ENCODE measurements at regions of chr11 and their contacts with region 1.

Region 1: DNA sequence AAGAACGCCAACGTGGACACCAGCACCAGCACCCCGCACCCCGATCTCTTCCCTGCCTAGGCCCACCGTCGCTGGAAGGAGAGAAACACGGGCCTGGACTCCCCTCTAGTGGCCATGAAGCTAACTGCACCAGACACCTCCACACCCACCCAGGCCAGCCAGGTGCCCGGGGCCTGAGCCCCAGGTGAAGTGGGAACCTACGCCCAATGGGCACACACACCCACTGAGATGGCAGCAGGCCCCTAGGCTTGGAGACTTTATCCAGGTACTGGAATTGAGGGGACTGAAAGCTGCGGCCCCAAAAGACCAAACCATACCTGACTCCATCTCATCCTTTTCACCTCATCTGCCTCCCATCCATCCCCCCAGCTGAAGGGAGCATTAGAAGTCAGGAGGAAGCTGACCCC is 81.0 kb downstream of the BUD13 start:
- DNase-seq: peak; percentile 64 to 86 (median 82)
- ATAC-seq: peak; percentile 96
- H3K4me3 ChIP-seq: no peak overlapping the region
- H3K27ac ChIP-seq: no peak overlapping the region
- H3K4me1 ChIP-seq: no peaks in the 10 kb centered on the region
- H3K27me3 ChIP-seq: peaks cover 0 to 12% of the 10 kb centered on the region in 2 experiments; a peak in 1 of 5 replicates
- CTCF ChIP-seq: peak; percentile 79 to 92 (median 85)
- EP300 ChIP-seq: no peak
- POLR2A ChIP-seq: no peak
- RAD21 ChIP-seq: peak; percentile 65 to 78

Region 2: GRCh38 chr11:114774599-114775361 is 1917.0 kb before region 1 on chr11:
- CTCF ChIA-PET with region 1: no interaction called
- POLR2A ChIA-PET with region 1: no interaction called
- in situ Hi-C with region 1: loop called (anchors 10 kb)
- intact Hi-C with region 1: no loop called
- DNase-seq: peak; percentile 59 to 72 (median 69)
- ATAC-seq: peak; percentile 99
- H3K4me3 ChIP-seq: no peak overlapping the region
- H3K27ac ChIP-seq: no peak overlapping the region
- H3K4me1 ChIP-seq: no peaks in the 10 kb centered on the region; a peak in 1 of 5 replicates
- H3K27me3 ChIP-seq: peaks cover 0 to 6% of the 10 kb centered on the region in 2 experiments; a peak in 1 of 5 replicates
- CTCF ChIP-seq: peak; percentile 76 to 91 (median 85)
- EP300 ChIP-seq: no peak
- POLR2A ChIP-seq: no peak
- RAD21 ChIP-seq: peak; percentile 63 to 79

Region 3: GRCh38 chr11:115990004-115990447 is 701.7 kb before region 1 on chr11:
- CTCF ChIA-PET with region 1: interaction called, 6 read pairs
- POLR2A ChIA-PET with region 1: no interaction called
- in situ Hi-C with region 1: loop called (anchors 10 kb)
- intact Hi-C with region 1: loop called (anchors 5 kb)
- DNase-seq: peak; percentile 30 to 66 (median 64)
- ATAC-seq: peak; percentile 98
- H3K4me3 ChIP-seq: peak overlapping the region; percentile 20; the same call in 1 of the 2 replicates
- H3K27ac ChIP-seq: no peak overlapping the region
- H3K4me1 ChIP-seq: no peaks in the 10 kb centered on the region; a peak in 1 of 5 replicates
- H3K27me3 ChIP-seq: no peaks in the 10 kb centered on the region; a peak in 1 of 5 replicates
- CTCF ChIP-seq: peak; percentile 69 to 86 (median 86)
- EP300 ChIP-seq: no peak
- POLR2A ChIP-seq: no peak
- RAD21 ChIP-seq: peak; percentile 32 to 52; a peak in 3 of 4 replicates

Region 4: GRCh38 chr11:116276051-116277044 is 415.4 kb before region 1 on chr11:
- CTCF ChIA-PET with region 1: no interaction called
- POLR2A ChIA-PET with region 1: no interaction called
- in situ Hi-C with region 1: no loop called
- intact Hi-C with region 1: loop called (anchors 5 kb)
- DNase-seq: peak; percentile 79 to 86 (median 84)
- ATAC-seq: peak; percentile 98
- H3K4me3 ChIP-seq: peak overlapping the region; percentile 62
- H3K27ac ChIP-seq: no peak overlapping the region; the same call in 2 of the 3 replicates
- H3K4me1 ChIP-seq: peaks cover 0 to 13% of the 10 kb centered on the region in 2 experiments; a peak in 2 of 5 replicates
- H3K27me3 ChIP-seq: no peaks in the 10 kb centered on the region; a peak in 1 of 5 replicates
- CTCF ChIP-seq: peak in 2 of 3 experiments; percentile 92 to 96
- EP300 ChIP-seq: peak; percentile 10; the same call in 1 of the 2 replicates
- POLR2A ChIP-seq: no peak
- RAD21 ChIP-seq: peak; percentile 85 to 87

Region 5: GRCh38 chr11:116454020-116454645 is 237.6 kb before region 1 on chr11:
- CTCF ChIA-PET with region 1: interaction called, 4 read pairs
- POLR2A ChIA-PET with region 1: no interaction called
- in situ Hi-C with region 1: no loop called
- intact Hi-C with region 1: loop called (anchors 1 kb)
- DNase-seq: peak; percentile 14 to 55 (median 23)
- ATAC-seq: peak; percentile 80
- H3K4me3 ChIP-seq: no peak overlapping the region
- H3K27ac ChIP-seq: no peak overlapping the region
- H3K4me1 ChIP-seq: no peaks in the 10 kb centered on the region
- H3K27me3 ChIP-seq: peaks cover 7 to 11% of the 10 kb centered on the region in 2 experiments; a peak in 3 of 5 replicates
- CTCF ChIP-seq: peak; percentile 58 to 72 (median 63)
- EP300 ChIP-seq: no peak
- POLR2A ChIP-seq: no peak
- RAD21 ChIP-seq: peak in 1 of 2 experiments; percentile 56; a peak in 2 of 4 replicates

Region 6: DNA sequence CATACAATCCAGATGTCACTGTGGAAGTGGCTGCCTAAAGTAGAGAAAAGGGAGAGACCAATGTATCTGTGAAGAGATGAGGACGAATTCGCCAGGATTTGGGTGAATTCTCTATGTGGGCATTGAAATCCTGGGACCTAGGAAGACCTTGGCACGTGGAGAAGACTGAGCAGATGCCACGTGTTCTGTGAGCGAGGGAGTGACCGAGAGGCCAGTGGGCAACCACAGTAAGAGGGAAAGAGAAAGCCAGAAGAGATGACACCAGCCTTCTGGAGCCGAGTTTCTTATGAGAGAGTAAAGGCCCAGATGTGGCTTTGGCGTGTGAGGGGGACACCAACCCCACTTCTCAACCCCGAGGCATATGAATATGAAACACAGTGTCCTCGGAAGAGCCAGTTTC is 147.1 kb before region 1 on chr11:
- CTCF ChIA-PET with region 1: no interaction called
- POLR2A ChIA-PET with region 1: no interaction called
- in situ Hi-C with region 1: no loop called
- intact Hi-C with region 1: no loop called
- DNase-seq: no peak
- ATAC-seq: no peak
- H3K4me3 ChIP-seq: no peak overlapping the region
- H3K27ac ChIP-seq: no peak overlapping the region
- H3K4me1 ChIP-seq: no peaks in the 10 kb centered on the region
- H3K27me3 ChIP-seq: peaks cover 0 to 5% of the 10 kb centered on the region in 2 experiments; a peak in 2 of 5 replicates
- CTCF ChIP-seq: no peak
- EP300 ChIP-seq: no peak
- POLR2A ChIP-seq: no peak
- RAD21 ChIP-seq: no peak

Region 7: GRCh38 chr11:116641561-116642045 is 50.2 kb before region 1 on chr11:
- CTCF ChIA-PET with region 1: no interaction called
- POLR2A ChIA-PET with region 1: no interaction called
- in situ Hi-C with region 1: no loop called
- intact Hi-C with region 1: loop called (anchors 5 kb)
- DNase-seq: peak; percentile 38 to 72 (median 44)
- ATAC-seq: peak; percentile 95
- H3K4me3 ChIP-seq: no peak overlapping the region
- H3K27ac ChIP-seq: no peak overlapping the region
- H3K4me1 ChIP-seq: no peaks in the 10 kb centered on the region
- H3K27me3 ChIP-seq: peaks cover 0 to 9% of the 10 kb centered on the region in 2 experiments; a peak in 2 of 5 replicates
- CTCF ChIP-seq: peak; percentile 76 to 87 (median 77)
- EP300 ChIP-seq: no peak
- POLR2A ChIP-seq: no peak
- RAD21 ChIP-seq: peak; percentile 43 to 77

Measured in K562 (cell line).